ENCODE measurements at regions of chr19 and their contacts with region 1.

Region 1: GRCh38 chr19:19192078-19192882 is at the starts of genes BORCS8 and RFXANK:
- DNase-seq: peak; percentile 98
- CTCF ChIP-seq: no peak

Region 2: GRCh38 chr19:19145684-19146608 is 46.3 kb before region 1 on chr19:
- CTCF ChIA-PET with region 1: interaction called, 11 read pairs
- POLR2A ChIA-PET with region 1: no interaction called
- DNase-seq: peak; percentile 88
- CTCF ChIP-seq: peak; percentile 98

Region 3: DNA sequence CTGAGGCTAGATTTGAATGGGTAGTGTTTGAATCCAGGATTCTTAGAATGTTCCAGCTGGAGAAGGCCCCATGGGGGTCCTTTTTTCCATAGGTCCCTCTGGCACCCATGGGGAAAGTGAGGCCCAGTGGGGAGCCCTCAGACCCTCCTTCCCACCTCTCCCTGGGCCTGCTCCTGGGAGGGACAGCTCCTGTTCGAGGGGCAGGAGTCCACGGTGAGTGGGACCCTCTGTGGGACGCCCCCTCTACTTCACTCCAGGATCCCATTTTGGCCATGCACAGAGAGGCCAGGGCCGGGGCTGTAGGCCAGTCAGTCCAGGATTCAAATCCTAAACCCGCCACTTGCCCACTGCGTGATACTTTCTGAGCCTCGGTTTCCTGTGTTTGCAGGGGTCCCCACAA is 29.8 kb before region 1 on chr19:
- CTCF ChIA-PET with region 1: no interaction called
- POLR2A ChIA-PET with region 1: no interaction called
- DNase-seq: no peak
- CTCF ChIP-seq: no peak

Region 4: DNA sequence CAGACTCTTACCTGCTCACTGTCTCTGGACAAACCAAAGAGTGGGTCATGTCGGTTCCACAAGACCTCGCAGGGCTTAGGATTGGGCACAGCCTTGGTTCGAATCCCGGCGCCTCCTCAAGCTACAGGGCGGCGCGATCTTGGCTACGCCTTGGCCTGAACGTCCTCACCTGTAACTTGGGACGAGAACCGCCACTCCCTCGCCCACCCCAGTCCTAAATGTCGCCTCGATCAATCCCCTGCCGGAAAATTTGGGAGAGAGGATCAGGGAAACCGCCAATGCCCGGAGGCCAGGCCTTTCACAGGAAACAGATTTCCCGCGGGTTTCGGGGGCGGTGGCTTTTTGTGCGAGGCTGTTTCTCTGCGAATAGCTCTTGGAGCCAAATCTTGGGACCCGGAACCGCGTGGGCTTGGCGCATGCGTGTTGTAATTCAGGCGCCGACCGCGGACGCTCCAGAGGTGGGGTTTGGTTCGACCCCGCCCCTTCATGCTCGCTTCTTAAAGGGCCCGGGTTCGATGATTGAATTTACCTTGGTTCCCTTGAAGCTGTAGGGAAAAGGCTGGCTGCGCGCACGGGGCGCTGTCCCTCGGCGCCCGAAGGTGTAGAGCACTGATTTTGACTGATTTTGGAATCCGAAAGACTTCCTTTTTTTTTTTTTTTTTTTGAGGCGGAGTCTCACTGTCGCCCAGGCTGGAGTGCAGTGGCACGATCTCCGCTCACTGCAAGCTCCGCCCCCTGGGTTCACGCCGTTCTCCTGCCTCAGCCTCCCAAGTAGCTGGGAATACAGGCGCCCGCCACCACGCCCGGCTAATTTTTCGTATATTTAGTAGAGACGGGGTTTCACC is 11.0 kb after region 1 on chr19 and contains the start of gene NR2C2AP:
- CTCF ChIA-PET with region 1: interaction called, 16 read pairs
- POLR2A ChIA-PET with region 1: interaction called, 3 read pairs
- DNase-seq: peak; percentile 98
- CTCF ChIP-seq: no peak

Measured in GM10248 (cell line).